CD4-positive, alpha-beta memory T cell (primary cell): ENCODE measurements at regions of chr17 and their contacts with region 1.

Region 1: GRCh38 chr17:58517734-58518609 is 3.5 kb upstream of the MTMR4 start:
- DNase-seq: peak; percentile 100
- H3K4me3 ChIP-seq: peak overlapping the region; percentile 82 to 98
- H3K4me3 Mint-ChIP-seq: peak overlapping the region; percentile 88 to 100 (median 96)
- H3K27ac ChIP-seq: peak overlapping the region; percentile 65
- H3K27ac Mint-ChIP-seq: peak overlapping the region; percentile 90 to 99 (median 97)
- H3K4me1 ChIP-seq: peaks cover 47% of the 10 kb centered on the region
- H3K4me1 Mint-ChIP-seq: peaks cover 27 to 55% (median 37%) of the 10 kb centered on the region in 4 donors
- H3K27me3 ChIP-seq: no peaks in the 10 kb centered on the region
- H3K27me3 Mint-ChIP-seq: peaks cover 0 to 2% of the 10 kb centered on the region in 2 donors

Region 2: DNA sequence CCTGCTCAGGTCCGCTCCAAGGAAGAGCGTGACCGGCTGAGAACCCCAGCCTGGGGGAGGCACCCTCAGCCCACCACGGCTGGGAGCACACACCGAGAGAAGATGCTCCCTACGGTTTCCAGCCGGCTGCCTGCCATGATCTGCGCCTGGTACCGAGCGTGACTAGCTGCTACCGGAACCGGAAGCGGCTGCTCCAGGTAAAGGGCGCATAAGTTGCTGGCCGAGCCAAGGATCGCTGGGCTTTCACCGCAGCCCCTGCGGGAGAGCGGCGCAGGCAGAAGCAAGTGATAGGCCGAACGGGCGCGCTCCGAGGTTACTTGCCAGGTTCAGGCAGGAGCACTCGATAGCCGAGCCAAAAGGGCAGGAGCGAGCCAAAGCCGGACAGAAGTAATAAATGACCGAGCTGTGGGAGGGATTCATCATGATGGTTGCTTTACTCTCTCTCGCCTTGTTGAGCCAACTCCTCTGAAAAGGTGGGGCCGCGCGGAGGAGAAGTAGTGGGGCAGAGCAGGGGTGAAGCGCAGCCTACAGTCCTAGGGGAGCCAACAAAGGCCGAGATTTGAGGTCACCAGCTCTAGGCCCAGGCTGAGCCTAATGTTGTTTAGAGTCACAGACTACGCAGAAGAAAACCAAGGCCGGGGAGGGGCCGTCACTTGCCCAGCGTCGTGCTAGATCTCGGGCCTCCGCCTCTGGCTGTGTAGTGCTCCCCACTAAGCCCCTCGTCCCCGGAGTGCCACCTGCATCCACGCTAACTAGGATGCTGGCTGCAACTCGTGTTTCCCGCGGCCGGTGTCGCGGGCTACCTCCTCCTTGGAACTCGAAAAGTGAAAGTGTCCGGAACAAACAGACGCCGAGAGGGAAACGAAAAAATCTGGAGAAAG is 667.9 kb before region 1 on chr17 and contains the start of gene MRPS23:
- CTCF ChIA-PET with region 1: no interaction called
- POLR2A ChIA-PET with region 1: interaction called, 7 read pairs
- intact Hi-C with region 1: loop called (anchors 1 kb)
- DNase-seq: peak; percentile 94 to 99 (median 97)
- H3K4me3 ChIP-seq: peak within 1 kb of the TSS; percentile 75 to 87
- H3K4me3 Mint-ChIP-seq: peak within 1 kb of the TSS; percentile 96 to 99 (median 98)
- H3K27ac ChIP-seq: peak within 1 kb of the TSS; percentile 92
- H3K27ac Mint-ChIP-seq: peak within 1 kb of the TSS; percentile 98 to 100 (median 99)
- H3K4me1 ChIP-seq: peaks cover 32% of the 10 kb centered on the region
- H3K4me1 Mint-ChIP-seq: peaks cover 27 to 57% (median 35%) of the 10 kb centered on the region in 4 donors
- H3K27me3 ChIP-seq: no peaks in the 10 kb centered on the region
- H3K27me3 Mint-ChIP-seq: no peaks in the 10 kb centered on the region
- total RNA-seq, gene MRPS23: 28.7 to 29.5 TPM

Region 3: GRCh38 chr17:58337600-58338453 is 180.1 kb before region 1 on chr17:
- CTCF ChIA-PET with region 1: no interaction called
- POLR2A ChIA-PET with region 1: interaction called, 17 read pairs
- intact Hi-C with region 1: no loop called
- DNase-seq: peak; percentile 89 to 96 (median 91)
- H3K4me3 ChIP-seq: peak overlapping the region; percentile 99
- H3K4me3 Mint-ChIP-seq: peak overlapping the region; percentile 88 to 99 (median 98)
- H3K27ac ChIP-seq: peak overlapping the region; percentile 97
- H3K27ac Mint-ChIP-seq: peak overlapping the region; percentile 94 to 99 (median 97)
- H3K4me1 ChIP-seq: peaks cover 89% of the 10 kb centered on the region
- H3K4me1 Mint-ChIP-seq: peaks cover 41 to 98% (median 64%) of the 10 kb centered on the region in 4 donors
- H3K27me3 ChIP-seq: no peaks in the 10 kb centered on the region
- H3K27me3 Mint-ChIP-seq: no peaks in the 10 kb centered on the region

Region 4: GRCh38 chr17:58432806-58433572 is 85.0 kb before region 1 on chr17:
- CTCF ChIA-PET with region 1: no interaction called
- POLR2A ChIA-PET with region 1: no interaction called
- intact Hi-C with region 1: no loop called
- DNase-seq: no peak
- H3K4me3 ChIP-seq: no peak overlapping the region
- H3K4me3 Mint-ChIP-seq: no peak overlapping the region
- H3K27ac ChIP-seq: no peak overlapping the region
- H3K27ac Mint-ChIP-seq: no peak overlapping the region
- H3K4me1 ChIP-seq: no peaks in the 10 kb centered on the region
- H3K4me1 Mint-ChIP-seq: no peaks in the 10 kb centered on the region
- H3K27me3 ChIP-seq: no peaks in the 10 kb centered on the region
- H3K27me3 Mint-ChIP-seq: no peaks in the 10 kb centered on the region

Region 5: DNA sequence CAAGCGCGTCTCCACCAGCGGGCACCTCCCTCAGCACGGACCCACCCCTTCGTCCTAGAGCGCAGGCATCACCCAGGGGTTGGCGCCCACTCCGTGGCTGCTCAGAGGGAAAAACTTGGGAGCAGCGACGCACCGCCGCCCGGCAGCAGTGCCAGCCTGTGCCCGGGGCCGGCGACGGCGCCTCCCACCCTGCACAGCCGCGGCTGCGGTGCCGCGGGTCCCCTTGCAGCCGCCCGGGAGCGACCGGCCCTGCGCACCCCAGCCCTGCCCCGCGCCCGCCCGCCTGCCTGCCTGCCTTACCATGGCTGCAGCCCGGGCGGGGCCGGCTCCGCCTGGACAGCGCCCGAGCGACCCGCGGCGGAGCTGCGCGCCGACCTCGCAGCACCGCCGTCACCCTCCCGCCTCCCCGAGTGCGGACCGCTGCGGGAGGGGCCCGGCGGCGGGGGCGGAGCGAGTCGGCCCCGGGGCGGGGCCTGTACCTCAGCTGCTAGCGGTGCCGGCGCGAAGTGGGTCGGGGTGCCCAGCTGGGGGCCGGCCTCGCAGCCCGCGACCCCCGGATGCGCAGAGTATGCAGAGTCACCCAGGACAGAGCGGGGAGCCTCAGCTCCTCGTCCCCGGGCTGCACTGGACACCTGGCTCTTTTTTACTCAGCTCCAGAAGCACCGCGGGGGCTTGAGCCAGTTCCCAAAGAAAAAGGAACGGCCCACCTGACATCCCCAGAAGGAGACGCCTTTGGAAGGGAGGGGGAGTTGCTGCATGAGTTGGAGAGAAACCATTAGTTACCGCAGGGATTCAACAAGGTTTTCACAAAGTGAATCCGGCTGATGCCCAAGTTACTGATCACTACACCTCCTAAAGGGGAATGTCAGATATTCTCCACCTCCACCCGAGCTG is 13.9 kb after region 1 on chr17:
- CTCF ChIA-PET with region 1: interaction called, 14 read pairs
- POLR2A ChIA-PET with region 1: interaction called, 30 read pairs
- intact Hi-C with region 1: loop called (anchors 1 kb)
- DNase-seq: peak in 4 of 5 donors; percentile 55 to 64 (median 60)
- H3K4me3 ChIP-seq: peak overlapping the region in 1 of 2 donors; percentile 33
- H3K4me3 Mint-ChIP-seq: peak overlapping the region; percentile 61 to 75 (median 70)
- H3K27ac ChIP-seq: no peak overlapping the region
- H3K27ac Mint-ChIP-seq: peak overlapping the region in 1 of 7 donors; percentile 42
- H3K4me1 ChIP-seq: peaks cover 11% of the 10 kb centered on the region
- H3K4me1 Mint-ChIP-seq: peaks cover 0 to 4% (median 0%) of the 10 kb centered on the region in 4 donors
- H3K27me3 ChIP-seq: no peaks in the 10 kb centered on the region
- H3K27me3 Mint-ChIP-seq: peaks cover 0 to 5% of the 10 kb centered on the region in 2 donors

Region 6: DNA sequence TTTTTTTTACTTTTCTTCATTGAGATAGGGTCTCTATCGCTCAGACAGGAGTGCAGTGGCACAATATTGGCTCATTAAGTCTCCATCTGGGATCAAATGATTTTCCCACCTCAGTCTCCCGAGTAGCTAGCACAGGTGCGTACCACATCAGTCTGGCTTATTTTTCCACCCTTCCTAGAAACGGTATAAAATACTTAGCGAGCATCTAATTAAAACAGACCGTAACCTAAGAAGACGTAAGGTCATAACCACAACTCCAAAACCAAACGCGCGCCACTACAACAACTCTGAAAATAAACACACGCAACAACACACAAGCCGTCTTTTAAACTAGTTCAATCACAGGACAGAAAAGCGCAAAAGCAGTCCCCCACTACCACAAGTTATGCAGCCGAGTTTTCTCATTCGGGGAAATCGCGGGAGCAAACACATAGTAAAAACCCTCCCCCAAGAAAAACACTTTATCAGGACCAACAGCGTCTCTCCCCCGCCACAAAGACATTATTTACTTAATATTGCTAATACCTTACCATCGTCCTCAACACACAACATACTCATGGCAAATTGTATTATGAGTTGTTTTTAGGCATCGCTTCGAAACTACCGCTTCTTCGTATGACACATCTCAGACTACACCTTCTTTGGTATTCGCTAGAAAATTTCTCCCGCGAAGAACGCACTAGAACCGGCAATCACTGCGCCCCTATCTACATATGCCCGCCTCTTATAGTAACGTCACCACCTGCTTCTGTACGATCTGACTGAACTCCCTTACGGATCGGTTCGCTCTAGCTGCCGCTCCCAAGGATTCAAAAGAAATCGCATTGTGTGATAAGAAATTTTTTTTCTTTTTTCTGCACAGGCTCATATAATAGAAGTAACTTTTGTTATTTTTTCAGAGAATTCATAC is 141.1 kb after region 1 on chr17:
- CTCF ChIA-PET with region 1: interaction called, 5 read pairs
- POLR2A ChIA-PET with region 1: interaction called, 14 read pairs
- intact Hi-C with region 1: loop called (anchors 1 kb)
- DNase-seq: peak; percentile 87 to 91 (median 89)
- H3K4me3 ChIP-seq: peak overlapping the region; percentile 43 to 83
- H3K4me3 Mint-ChIP-seq: peak overlapping the region; percentile 83 to 95 (median 91)
- H3K27ac ChIP-seq: peak overlapping the region; percentile 77
- H3K27ac Mint-ChIP-seq: peak overlapping the region; percentile 97 to 100 (median 100)
- H3K4me1 ChIP-seq: peaks cover 13% of the 10 kb centered on the region
- H3K4me1 Mint-ChIP-seq: peaks cover 12 to 18% (median 15%) of the 10 kb centered on the region in 4 donors
- H3K27me3 ChIP-seq: no peaks in the 10 kb centered on the region
- H3K27me3 Mint-ChIP-seq: peaks cover 0 to 2% of the 10 kb centered on the region in 2 donors

Region 7: DNA sequence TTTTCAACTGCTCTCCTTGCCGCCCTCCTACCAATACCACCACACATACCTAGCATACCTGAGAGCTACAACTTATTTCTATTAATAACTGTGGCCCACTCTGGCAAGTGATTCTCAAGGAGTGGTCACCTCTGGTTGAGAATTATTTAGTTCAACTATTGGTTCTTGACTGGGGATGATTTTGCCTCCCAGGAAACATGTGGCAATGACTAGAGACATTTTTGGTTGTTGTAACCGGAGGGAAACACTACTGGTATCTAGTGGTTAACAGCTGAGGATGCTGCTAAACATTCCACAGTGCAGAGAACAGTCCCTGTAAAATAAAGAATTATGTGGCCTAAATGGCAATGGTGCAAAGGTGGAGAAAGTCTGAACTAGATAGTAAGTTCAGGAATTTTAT is 492.1 kb after region 1 on chr17:
- CTCF ChIA-PET with region 1: interaction called, 40 read pairs
- POLR2A ChIA-PET with region 1: interaction called, 28 read pairs
- intact Hi-C with region 1: loop called (anchors 1 kb)
- DNase-seq: no peak
- H3K4me3 ChIP-seq: no peak overlapping the region
- H3K4me3 Mint-ChIP-seq: no peak overlapping the region
- H3K27ac ChIP-seq: no peak overlapping the region
- H3K27ac Mint-ChIP-seq: peak overlapping the region in 3 of 7 donors; percentile 18 to 76 (median 45)
- H3K4me1 ChIP-seq: no peaks in the 10 kb centered on the region
- H3K4me1 Mint-ChIP-seq: peaks cover 0 to under 1% (median 0%) of the 10 kb centered on the region in 4 donors
- H3K27me3 ChIP-seq: no peaks in the 10 kb centered on the region
- H3K27me3 Mint-ChIP-seq: no peaks in the 10 kb centered on the region

Region 8: GRCh38 chr17:59361916-59362810 is 844.2 kb after region 1 on chr17:
- CTCF ChIA-PET with region 1: no interaction called
- POLR2A ChIA-PET with region 1: no interaction called
- intact Hi-C with region 1: no loop called
- DNase-seq: peak; percentile 49 to 62 (median 59)
- H3K4me3 ChIP-seq: peak overlapping the region in 1 of 2 donors; percentile 21
- H3K4me3 Mint-ChIP-seq: peak overlapping the region; percentile 70 to 92 (median 81)
- H3K27ac ChIP-seq: peak overlapping the region; percentile 35
- H3K27ac Mint-ChIP-seq: peak overlapping the region; percentile 85 to 96 (median 86)
- H3K4me1 ChIP-seq: peaks cover 83% of the 10 kb centered on the region
- H3K4me1 Mint-ChIP-seq: peaks cover 57 to 89% (median 80%) of the 10 kb centered on the region in 4 donors
- H3K27me3 ChIP-seq: no peaks in the 10 kb centered on the region
- H3K27me3 Mint-ChIP-seq: no peaks in the 10 kb centered on the region

Region 9: DNA sequence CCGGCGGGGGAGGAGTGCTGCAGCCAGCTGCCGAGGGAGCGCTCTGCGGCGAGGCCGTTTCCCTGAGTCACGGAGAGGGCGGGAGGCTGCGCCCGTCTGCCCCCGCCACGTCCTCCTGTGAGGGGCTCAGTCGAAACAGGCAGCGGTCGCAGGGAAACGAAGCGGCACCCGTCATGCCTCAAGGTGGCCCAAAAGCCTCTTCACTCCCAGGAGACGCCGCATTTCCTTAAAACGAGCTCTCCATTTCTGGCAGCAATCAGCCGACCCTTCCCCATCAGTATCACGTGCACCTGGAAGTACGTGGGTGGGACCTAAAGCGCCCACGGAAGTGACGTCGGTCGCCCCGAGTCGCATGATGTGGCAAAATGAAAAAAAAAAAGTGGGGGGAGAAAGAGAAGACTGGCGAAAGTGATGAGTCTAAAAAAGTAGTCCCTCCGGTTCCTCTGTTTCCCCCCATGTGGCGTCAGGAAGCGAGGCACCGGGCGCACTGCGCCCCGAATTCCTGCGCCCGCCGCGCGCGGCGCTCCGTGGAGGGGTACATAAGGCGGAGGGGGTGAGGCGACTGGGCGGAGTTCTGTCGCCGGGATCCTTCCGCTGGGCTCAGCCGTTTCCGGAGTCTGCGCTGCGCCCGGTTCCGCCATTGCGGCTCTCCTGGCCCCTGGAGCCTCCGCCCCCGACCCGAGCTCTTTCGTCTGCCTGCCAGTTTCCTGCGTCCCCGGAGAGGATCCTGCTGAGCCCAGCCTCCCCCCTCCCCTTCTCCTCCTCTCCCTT is 1101.5 kb after region 1 on chr17 and contains the start of gene CLTC:
- CTCF ChIA-PET with region 1: no interaction called
- POLR2A ChIA-PET with region 1: no interaction called
- intact Hi-C with region 1: loop called (anchors 5 kb)
- DNase-seq: peak; percentile 95 to 97 (median 96)
- H3K4me3 ChIP-seq: peak within 1 kb of the TSS; percentile 89 to 98
- H3K4me3 Mint-ChIP-seq: peak within 1 kb of the TSS; percentile 92 to 99 (median 97)
- H3K27ac ChIP-seq: peak within 1 kb of the TSS; percentile 96
- H3K27ac Mint-ChIP-seq: peak within 1 kb of the TSS; percentile 97 to 99 (median 99)
- H3K4me1 ChIP-seq: peaks cover 49% of the 10 kb centered on the region
- H3K4me1 Mint-ChIP-seq: peaks cover 28 to 69% (median 44%) of the 10 kb centered on the region in 4 donors
- H3K27me3 ChIP-seq: no peaks in the 10 kb centered on the region
- H3K27me3 Mint-ChIP-seq: no peaks in the 10 kb centered on the region
- total RNA-seq, gene CLTC: 115 to 118 TPM